Aorta (tissue), 5 donors: ENCODE measurements at regions of chr1 and their contacts with region 1.

Region 1: DNA sequence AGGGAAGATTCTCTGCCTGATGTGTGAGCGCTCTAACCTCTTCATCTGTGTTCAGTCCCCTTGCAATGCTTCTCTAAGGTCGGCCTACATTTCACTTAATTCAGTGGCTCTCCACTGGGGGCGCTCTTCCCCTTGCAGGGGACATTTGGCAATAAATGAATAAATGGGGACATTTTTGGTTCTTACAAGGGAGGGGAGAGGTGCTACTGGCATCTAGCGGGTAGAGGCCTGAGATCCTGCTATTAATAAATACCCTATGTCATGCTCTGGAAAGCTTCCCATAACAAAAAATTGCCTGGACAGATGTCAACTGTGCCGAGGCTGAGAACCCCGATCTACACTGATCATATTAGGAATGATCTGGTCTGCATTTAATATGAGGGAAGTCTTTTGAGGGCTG is 25.9 kb upstream of the DNAJC11 start:
- DNase-seq: peak; percentile 66 to 87
- ATAC-seq: no peak
- H3K4me3 ChIP-seq: no peak overlapping the region
- H3K27ac ChIP-seq: no peak overlapping the region
- H3K4me1 ChIP-seq: no peaks in the 10 kb centered on the region
- H3K27me3 ChIP-seq: no peaks in the 10 kb centered on the region

Region 2: GRCh38 chr1:6774381-6774780 is 46.8 kb after region 1 on chr1:
- intact Hi-C with region 1: no loop called
- DNase-seq: no peak
- ATAC-seq: no peak
- H3K4me3 ChIP-seq: no peak overlapping the region
- H3K27ac ChIP-seq: no peak overlapping the region
- H3K4me1 ChIP-seq: no peaks in the 10 kb centered on the region
- H3K27me3 ChIP-seq: no peaks in the 10 kb centered on the region

Region 3: DNA sequence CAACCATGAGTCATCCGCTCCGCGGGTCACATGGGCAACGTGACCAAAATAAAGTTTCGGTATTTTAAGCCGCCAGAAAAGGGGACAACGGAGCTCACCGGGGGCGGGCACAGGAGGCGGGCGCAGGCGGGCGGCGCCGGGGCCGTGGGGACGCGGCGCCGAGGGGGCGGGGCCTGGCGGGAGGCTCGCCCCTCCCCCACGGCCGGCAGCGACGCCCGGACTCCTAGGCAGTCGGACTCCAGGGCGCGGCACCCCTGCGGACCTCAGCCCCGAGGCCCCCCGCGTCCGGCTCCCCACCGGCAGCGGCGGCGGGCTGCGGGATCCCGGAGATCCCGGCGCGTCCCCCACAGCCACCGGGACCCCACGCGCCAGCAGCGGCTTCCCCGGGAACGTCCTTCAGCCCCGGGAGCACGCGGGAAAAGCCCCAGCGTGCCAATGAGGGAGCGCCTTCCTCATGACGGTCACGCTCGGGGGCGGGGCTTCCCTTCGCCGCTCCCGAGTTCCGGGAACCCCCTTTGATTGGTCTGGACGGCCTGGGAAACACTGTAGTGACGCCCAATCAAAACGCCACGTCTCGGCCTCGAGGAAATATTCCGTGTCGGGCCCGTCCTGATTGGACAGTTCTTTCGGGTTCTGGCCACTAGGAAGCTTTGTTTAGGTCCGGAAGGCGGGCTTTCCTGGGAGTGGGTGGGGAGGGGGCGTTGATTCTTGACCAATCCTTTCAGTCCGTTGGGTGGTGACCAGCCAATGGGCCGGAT is 57.2 kb after region 1 on chr1:
- intact Hi-C with region 1: loop called (anchors 5 to 10 kb)
- DNase-seq: peak; percentile 99 to 100
- ATAC-seq: peak; percentile 96
- H3K4me3 ChIP-seq: peak overlapping the region; percentile 35 to 82
- H3K27ac ChIP-seq: peak overlapping the region; percentile 78 to 84
- H3K4me1 ChIP-seq: peaks cover 1 to 3% of the 10 kb centered on the region in 2 donors
- H3K27me3 ChIP-seq: no peaks in the 10 kb centered on the region

Region 4: GRCh38 chr1:6889875-6890480 is 162.4 kb after region 1 on chr1:
- intact Hi-C with region 1: loop called (anchors 5 kb)
- DNase-seq: peak; percentile 73 to 79
- ATAC-seq: peak; percentile 71
- H3K4me3 ChIP-seq: no peak overlapping the region
- H3K27ac ChIP-seq: no peak overlapping the region
- H3K4me1 ChIP-seq: no peaks in the 10 kb centered on the region
- H3K27me3 ChIP-seq: no peaks in the 10 kb centered on the region

Region 5: GRCh38 chr1:7070389-7071029 is 343.0 kb after region 1 on chr1:
- intact Hi-C with region 1: loop called in 1 of 2 experiments (anchors 5 kb)
- DNase-seq: peak in 1 of 2 donors; percentile 68
- ATAC-seq: peak; percentile 84
- H3K4me3 ChIP-seq: peak overlapping the region; percentile 6 to 51
- H3K27ac ChIP-seq: no peak overlapping the region
- H3K4me1 ChIP-seq: no peaks in the 10 kb centered on the region
- H3K27me3 ChIP-seq: no peaks in the 10 kb centered on the region

Region 6: DNA sequence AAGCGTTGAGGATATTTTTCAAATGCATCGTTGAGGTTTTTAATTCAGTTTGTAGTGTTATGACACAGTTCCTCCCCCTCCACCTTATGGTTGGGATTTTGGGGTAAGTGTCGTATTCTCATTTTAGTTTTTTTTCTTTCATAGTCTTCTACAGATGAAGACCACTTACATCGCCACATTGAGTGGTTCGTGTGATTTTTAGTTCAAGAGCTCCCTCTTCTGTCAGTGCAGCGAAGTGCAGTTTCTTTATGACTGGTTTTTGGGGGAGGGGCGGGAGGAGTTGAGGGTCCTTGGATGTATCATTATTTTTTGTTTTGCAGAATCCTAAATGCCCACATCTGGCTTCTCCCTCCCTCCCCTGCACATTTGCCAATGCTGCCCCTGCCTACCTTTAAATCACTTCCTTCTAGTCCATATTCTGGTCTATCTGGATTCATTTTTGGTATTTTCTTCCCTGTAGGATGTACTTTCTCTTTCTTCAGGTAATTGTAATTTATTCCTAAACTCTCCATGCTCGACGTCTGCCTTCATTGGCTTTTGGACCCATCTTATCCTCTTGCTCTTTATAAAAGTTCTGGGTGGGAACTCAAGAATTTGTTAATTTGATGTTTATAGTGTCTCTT is 490.8 kb after region 1 on chr1:
- intact Hi-C with region 1: loop called (anchors 5 kb)
- DNase-seq: no peak
- ATAC-seq: no peak
- H3K4me3 ChIP-seq: no peak overlapping the region
- H3K27ac ChIP-seq: no peak overlapping the region
- H3K4me1 ChIP-seq: no peaks in the 10 kb centered on the region
- H3K27me3 ChIP-seq: no peaks in the 10 kb centered on the region

Region 7: DNA sequence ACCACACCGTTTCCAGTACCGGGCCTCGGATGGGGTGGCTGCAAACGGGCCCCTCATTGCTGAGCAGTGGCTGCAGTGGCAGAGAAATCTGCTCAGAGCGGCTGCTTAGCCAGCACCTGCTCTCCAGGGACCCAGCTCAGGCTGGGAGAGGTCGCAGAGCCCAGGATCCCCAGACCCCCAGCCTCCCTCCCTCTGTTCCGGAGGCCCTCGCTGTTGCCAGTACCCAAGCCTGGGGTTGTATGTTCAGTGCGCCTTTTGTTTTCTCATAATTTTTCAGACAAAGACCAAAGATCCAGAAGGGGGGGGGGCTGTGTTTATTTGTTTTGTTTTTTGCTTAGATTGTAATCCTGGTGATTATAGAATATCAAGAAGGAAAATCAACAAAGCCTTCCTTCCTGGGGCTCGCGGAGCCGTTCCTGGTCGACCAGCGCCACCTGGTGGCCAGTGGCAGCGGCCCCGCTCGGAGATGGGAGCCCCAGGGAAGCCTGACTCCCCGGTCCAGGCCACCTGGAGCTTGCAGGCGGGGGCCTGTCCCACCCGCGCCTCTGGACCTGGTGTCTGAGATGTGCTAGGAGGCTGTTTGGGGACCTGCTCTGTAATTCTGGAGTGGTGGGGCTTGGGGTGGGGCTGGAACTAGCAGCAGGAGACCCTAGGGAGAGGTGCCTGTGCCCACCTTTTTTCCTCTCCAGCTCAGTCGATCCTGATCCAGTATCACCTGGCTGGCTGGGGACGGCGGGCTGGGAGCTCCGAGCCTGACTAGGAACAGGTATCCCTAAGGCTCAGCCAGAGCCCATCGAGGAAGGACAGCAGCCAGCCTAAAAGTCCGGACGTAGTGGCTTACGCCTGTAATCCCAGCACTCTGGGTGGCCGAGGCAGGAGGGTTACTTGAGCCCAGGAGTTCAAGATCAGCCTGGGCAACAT is 919.7 kb after region 1 on chr1:
- intact Hi-C with region 1: loop called in 1 of 2 experiments (anchors 10 kb)
- DNase-seq: peak; percentile 74 to 93
- ATAC-seq: no peak
- H3K4me3 ChIP-seq: no peak overlapping the region
- H3K27ac ChIP-seq: no peak overlapping the region
- H3K4me1 ChIP-seq: no peaks in the 10 kb centered on the region
- H3K27me3 ChIP-seq: no peaks in the 10 kb centered on the region